ENCODE measurements at regions of chr9 and their contacts with region 1.

Region 1: GRCh38 chr9:97305501-97306298 is 1.8 kb upstream of the CCDC180 start:
- DNase-seq: no peak
- ATAC-seq: no peak
- H3K4me3 Mint-ChIP-seq: no peak overlapping the region
- H3K27ac Mint-ChIP-seq: no peak overlapping the region; the same call in 1 of the 2 replicates
- H3K4me1 Mint-ChIP-seq: peaks cover 15% of the 10 kb centered on the region
- H3K27me3 Mint-ChIP-seq: no peaks in the 10 kb centered on the region; the same call in none of the 2 replicates
- CTCF ChIP-seq: no peak

Region 2: DNA sequence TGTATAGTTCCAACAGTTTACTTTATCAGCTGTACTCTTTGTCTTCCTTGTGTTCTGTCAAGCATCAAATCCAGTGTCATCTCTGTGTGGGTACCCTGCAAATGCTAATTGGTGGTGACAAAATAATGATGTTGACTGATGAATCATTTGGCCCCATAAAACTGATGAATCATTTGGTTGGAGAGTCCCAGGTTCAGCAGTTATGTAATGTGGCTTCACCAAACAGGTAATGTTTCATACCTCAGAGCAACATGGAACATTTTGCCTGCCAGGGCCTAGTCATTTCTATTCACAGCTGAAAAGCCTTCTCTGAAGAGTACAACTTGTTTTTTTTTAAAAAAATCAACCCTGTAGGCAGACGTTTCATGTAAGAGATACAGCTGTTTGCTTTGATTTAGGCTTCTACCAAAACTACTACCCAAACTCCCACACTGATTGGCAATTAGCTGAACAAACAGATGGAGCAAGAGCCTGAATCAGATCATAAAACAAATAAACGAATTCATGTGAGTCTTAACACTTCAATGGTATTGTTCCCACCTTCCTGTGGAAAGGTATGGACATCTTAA is 243.2 kb before region 1 on chr9:
- CTCF ChIA-PET with region 1: no interaction called
- POLR2A ChIA-PET with region 1: no interaction called
- DNase-seq: no peak
- ATAC-seq: no peak
- H3K4me3 Mint-ChIP-seq: no peak overlapping the region
- H3K27ac Mint-ChIP-seq: no peak overlapping the region
- H3K4me1 Mint-ChIP-seq: no peaks in the 10 kb centered on the region
- H3K27me3 Mint-ChIP-seq: no peaks in the 10 kb centered on the region; the same call in none of the 2 replicates
- CTCF ChIP-seq: no peak

Region 3: GRCh38 chr9:97272072-97272471 is 33.6 kb before region 1 on chr9:
- CTCF ChIA-PET with region 1: no interaction called
- POLR2A ChIA-PET with region 1: interaction called, 11 read pairs
- DNase-seq: no peak
- ATAC-seq: no peak
- H3K4me3 Mint-ChIP-seq: peak overlapping the region; percentile 39
- H3K27ac Mint-ChIP-seq: no peak overlapping the region; the same call in 1 of the 2 replicates
- H3K4me1 Mint-ChIP-seq: peaks cover 39% of the 10 kb centered on the region
- H3K27me3 Mint-ChIP-seq: no peaks in the 10 kb centered on the region
- CTCF ChIP-seq: no peak